ENCODE measurements at regions of chr15 and their contacts with region 1.

Region 1: GRCh38 chr15:75042730-75043508 is 19.5 kb downstream of the PPCDC start:
- DNase-seq: peak; percentile 98 to 100 (median 99)
- H3K4me3 ChIP-seq: peak overlapping the region in 5 of 7 experiments; percentile 6 to 50 (median 39)
- H3K27ac ChIP-seq: peak overlapping the region; percentile 90
- H3K4me1 ChIP-seq: peaks cover 16 to 98% (median 94%) of the 10 kb centered on the region in 4 experiments
- H3K27me3 ChIP-seq: no peaks in the 10 kb centered on the region

Region 2: DNA sequence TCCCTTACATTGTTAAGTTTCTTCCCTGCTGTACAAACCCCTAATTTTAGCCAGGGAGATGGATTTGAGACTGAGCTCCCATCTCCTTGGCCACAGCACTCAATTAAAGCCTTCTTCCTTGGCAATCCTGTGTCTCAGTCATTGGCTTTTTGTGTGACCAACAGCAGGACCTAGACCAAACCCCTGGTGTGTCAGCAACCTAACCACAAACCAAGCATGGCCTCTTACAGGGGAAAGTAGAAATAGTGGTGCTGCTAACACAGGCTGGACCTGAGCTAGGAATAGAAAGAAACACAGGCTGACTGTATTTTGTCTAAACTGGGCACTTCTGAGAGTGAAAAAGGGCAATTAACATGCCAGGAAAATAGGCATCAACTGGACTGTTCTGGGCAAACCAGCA is 18.4 kb after region 1 on chr15:
- CTCF ChIA-PET with region 1: interaction called, 32 read pairs
- POLR2A ChIA-PET with region 1: interaction called, 7 read pairs
- DNase-seq: peak; percentile 52 to 81 (median 80)
- H3K4me3 ChIP-seq: peak overlapping the region in 2 of 7 experiments; percentile 1 to 32
- H3K27ac ChIP-seq: no peak overlapping the region
- H3K4me1 ChIP-seq: peaks cover 16 to 65% (median 34%) of the 10 kb centered on the region in 4 experiments
- H3K27me3 ChIP-seq: no peaks in the 10 kb centered on the region

Region 3: DNA sequence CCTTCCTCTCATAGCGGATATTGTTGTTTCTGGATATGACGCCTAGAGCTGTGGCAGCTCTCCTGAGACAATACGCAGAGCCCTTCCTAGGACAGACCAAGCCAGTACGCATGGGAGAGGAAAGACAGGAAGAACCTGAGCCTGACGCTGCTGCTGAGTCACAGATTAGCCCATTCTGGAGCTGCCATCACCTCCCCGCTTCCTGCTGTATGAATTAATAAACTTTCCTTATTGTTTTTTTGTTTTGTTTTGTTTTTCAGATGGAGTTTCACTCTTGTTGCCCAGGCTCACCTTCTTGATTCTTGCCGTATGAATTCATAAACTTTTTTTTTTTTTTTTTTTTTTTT is 47.4 kb after region 1 on chr15:
- CTCF ChIA-PET with region 1: interaction called, 16 read pairs
- POLR2A ChIA-PET with region 1: interaction called, 3 read pairs
- DNase-seq: peak; percentile 80 to 86 (median 81)
- H3K4me3 ChIP-seq: peak overlapping the region in 4 of 7 experiments; percentile 22 to 59 (median 44)
- H3K27ac ChIP-seq: peak overlapping the region in 1 of 2 experiments; percentile 57
- H3K4me1 ChIP-seq: peaks cover 2 to 13% (median 8%) of the 10 kb centered on the region in 4 experiments
- H3K27me3 ChIP-seq: no peaks in the 10 kb centered on the region

Region 4: DNA sequence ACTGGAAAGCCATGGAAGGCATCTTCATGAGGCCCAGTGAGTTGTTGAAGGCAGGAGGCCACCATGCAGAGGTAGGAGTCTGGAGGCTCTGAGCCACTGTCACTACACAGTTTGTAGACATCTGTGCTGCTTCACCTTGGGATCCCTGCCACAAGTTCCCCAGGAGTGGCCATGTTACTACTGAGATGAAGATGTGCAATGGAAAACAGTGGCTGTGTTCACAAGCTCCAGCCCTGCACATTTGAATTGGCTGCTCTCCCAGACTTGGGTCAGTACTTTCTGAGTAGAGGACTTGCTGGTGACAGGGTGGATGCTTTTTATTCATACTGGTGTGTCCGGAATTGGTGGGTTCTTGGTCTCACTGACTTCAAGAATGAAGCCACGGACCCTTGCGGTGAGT is 71.9 kb after region 1 on chr15:
- CTCF ChIA-PET with region 1: interaction called, 95 read pairs
- POLR2A ChIA-PET with region 1: interaction called, 57 read pairs
- DNase-seq: no peak
- H3K4me3 ChIP-seq: no peak overlapping the region
- H3K27ac ChIP-seq: no peak overlapping the region
- H3K4me1 ChIP-seq: peaks cover 6 to 38% (median 29%) of the 10 kb centered on the region in 4 experiments
- H3K27me3 ChIP-seq: no peaks in the 10 kb centered on the region

Region 5: GRCh38 chr15:75153087-75153486 is 110.2 kb after region 1 on chr15:
- CTCF ChIA-PET with region 1: interaction called, 14 read pairs
- POLR2A ChIA-PET with region 1: interaction called, 7 read pairs
- DNase-seq: peak; percentile 86 to 93 (median 92)
- H3K4me3 ChIP-seq: peak overlapping the region in 3 of 7 experiments; percentile 34 to 45 (median 36)
- H3K27ac ChIP-seq: no peak overlapping the region
- H3K4me1 ChIP-seq: peaks cover 15 to 72% (median 57%) of the 10 kb centered on the region in 4 experiments
- H3K27me3 ChIP-seq: no peaks in the 10 kb centered on the region

Region 6: GRCh38 chr15:75201609-75202250 is 158.8 kb after region 1 on chr15 and contains the start of gene C15orf39:
- CTCF ChIA-PET with region 1: interaction called, 191 read pairs
- POLR2A ChIA-PET with region 1: interaction called, 40 read pairs
- DNase-seq: peak; percentile 63 to 82 (median 78)
- H3K4me3 ChIP-seq: peak within 1 kb of the TSS; percentile 83 to 95 (median 91)
- H3K27ac ChIP-seq: peak within 1 kb of the TSS; percentile 87 to 93
- H3K4me1 ChIP-seq: peaks cover 20 to 84% (median 79%) of the 10 kb centered on the region in 4 experiments
- H3K27me3 ChIP-seq: no peaks in the 10 kb centered on the region